Activated CD4-positive, alpha-beta memory T cell treated with anti-CD3 and anti-CD28 coated beads for 36 hours (primary cell): ENCODE measurements at regions of chr4 and their contacts with region 1.

Region 1: GRCh38 chr4:72326692-72327632 is 242.1 kb downstream of the ADAMTS3 start:
- DNase-seq: no peak
- H3K4me3 Mint-ChIP-seq: no peak overlapping the region
- H3K27ac Mint-ChIP-seq: no peak overlapping the region
- H3K4me1 Mint-ChIP-seq: no peaks in the 10 kb centered on the region
- H3K27me3 Mint-ChIP-seq: peaks cover 2% of the 10 kb centered on the region

Region 2: GRCh38 chr4:72208421-72209075 is 118.4 kb before region 1 on chr4:
- CTCF ChIA-PET with region 1: no interaction called
- POLR2A ChIA-PET with region 1: no interaction called
- intact Hi-C with region 1: no loop called
- DNase-seq: no peak
- H3K4me3 Mint-ChIP-seq: no peak overlapping the region
- H3K27ac Mint-ChIP-seq: no peak overlapping the region
- H3K4me1 Mint-ChIP-seq: no peaks in the 10 kb centered on the region
- H3K27me3 Mint-ChIP-seq: no peaks in the 10 kb centered on the region

Region 3: DNA sequence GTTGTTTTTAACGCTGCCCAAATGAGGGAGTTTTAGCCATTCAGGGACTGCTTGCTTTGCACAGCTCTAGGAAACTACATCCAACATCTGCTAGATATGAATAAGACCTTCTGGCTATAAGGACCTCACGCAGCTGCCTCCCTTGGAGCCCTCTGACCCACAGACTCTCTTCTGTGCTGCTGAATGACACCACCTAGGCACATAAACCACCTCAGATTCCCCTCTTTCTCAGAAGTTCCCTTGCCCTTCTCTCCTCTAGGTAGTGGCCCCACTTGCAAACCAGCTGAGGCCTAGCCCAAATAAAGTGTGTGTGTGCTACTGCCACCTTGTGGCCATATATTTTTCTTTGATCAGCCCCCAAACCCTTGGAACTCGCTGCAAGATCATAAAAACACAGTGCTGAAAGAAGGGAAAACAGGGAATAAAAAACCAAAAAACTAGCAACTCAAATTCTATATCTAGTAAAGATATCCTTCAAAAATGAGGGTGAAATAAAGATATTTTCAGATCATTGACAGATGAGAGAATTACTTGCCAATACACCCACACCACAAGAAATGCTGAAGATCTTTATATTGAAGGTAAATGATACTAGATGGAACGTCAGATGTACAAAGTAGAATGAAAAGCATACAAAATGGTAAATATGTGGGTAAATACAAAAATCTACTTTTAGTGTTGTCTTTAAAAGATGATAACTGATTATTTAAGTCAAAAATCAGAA is 23.8 kb before region 1 on chr4:
- CTCF ChIA-PET with region 1: interaction called, 11 read pairs
- POLR2A ChIA-PET with region 1: no interaction called
- intact Hi-C with region 1: no loop called
- DNase-seq: peak; percentile 40
- H3K4me3 Mint-ChIP-seq: no peak overlapping the region
- H3K27ac Mint-ChIP-seq: no peak overlapping the region
- H3K4me1 Mint-ChIP-seq: no peaks in the 10 kb centered on the region
- H3K27me3 Mint-ChIP-seq: no peaks in the 10 kb centered on the region

Region 4: DNA sequence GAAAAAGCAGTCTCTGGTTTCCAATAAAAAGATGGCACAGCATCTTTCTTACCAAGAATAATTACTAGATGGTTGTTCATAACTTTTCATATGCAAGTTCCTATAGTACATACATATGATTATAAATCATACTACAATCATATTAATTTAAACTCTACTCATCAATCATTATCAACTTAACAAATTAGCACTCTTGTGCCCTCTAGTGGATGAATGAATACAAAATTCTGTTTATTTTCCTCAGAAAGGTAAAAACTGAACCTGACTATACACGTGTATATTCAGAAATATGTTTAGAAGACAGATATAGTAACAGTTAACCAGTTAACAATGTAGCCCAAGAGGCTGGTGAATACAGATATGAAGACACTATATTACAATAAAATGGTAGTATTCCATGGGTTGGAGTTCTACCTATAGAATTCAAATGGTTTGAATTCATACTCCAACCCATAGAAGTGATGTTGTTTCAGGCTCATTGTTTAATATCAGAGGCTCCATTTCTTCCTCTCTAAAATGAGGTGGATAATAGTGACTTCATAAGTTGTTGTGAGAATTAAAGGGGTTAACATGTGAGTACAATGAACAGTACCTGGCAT is 142.0 kb after region 1 on chr4:
- CTCF ChIA-PET with region 1: interaction called, 8 read pairs
- POLR2A ChIA-PET with region 1: no interaction called
- intact Hi-C with region 1: loop called (anchors 1 kb)
- DNase-seq: no peak
- H3K4me3 Mint-ChIP-seq: no peak overlapping the region
- H3K27ac Mint-ChIP-seq: no peak overlapping the region
- H3K4me1 Mint-ChIP-seq: no peaks in the 10 kb centered on the region
- H3K27me3 Mint-ChIP-seq: no peaks in the 10 kb centered on the region

Region 5: GRCh38 chr4:72701987-72702819 is 375.2 kb after region 1 on chr4:
- CTCF ChIA-PET with region 1: no interaction called
- POLR2A ChIA-PET with region 1: no interaction called
- intact Hi-C with region 1: loop called (anchors 10 kb)
- DNase-seq: no peak
- H3K4me3 Mint-ChIP-seq: peak overlapping the region; percentile 69
- H3K27ac Mint-ChIP-seq: no peak overlapping the region
- H3K4me1 Mint-ChIP-seq: no peaks in the 10 kb centered on the region
- H3K27me3 Mint-ChIP-seq: no peaks in the 10 kb centered on the region

Region 6: DNA sequence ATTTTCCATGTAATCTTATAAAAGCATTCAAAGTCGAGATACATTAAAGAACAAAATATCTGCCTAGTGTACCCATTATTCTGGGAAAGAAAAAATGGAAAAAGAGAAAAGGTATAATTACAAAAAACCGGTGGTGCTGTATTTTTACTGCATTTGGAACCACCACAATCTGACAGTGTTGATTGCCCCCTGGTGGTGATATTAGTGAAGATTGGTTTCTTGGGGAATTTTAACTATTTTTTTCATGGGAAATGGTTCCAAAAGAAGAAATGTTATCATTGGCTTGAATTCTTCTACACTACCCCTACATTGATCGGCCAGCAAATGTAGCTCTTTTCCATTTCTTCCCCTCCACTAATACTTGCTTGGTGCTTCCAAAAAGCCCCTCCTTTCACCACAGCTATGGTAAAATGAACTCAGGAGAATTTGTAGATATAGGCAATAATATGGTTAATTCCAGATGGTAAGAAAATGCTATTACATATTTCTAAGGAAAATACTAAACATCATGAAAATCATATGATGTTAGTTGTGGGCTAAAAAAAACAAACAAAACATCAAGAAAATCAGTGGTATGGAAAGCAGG is 692.6 kb after region 1 on chr4:
- CTCF ChIA-PET with region 1: interaction called, 8 read pairs
- POLR2A ChIA-PET with region 1: no interaction called
- intact Hi-C with region 1: loop called (anchors 5 kb)
- DNase-seq: no peak
- H3K4me3 Mint-ChIP-seq: no peak overlapping the region
- H3K27ac Mint-ChIP-seq: no peak overlapping the region
- H3K4me1 Mint-ChIP-seq: no peaks in the 10 kb centered on the region
- H3K27me3 Mint-ChIP-seq: peaks cover 5% of the 10 kb centered on the region